Endothelial cell of umbilical vein (primary cell): ENCODE measurements at regions of chrX and their contacts with region 1.

Region 1: GRCh38 chrX:123779908-123780396 is 47.1 kb upstream of the THOC2 start:
- DNase-seq: no peak
- H3K4me3 ChIP-seq: no peak overlapping the region
- H3K27ac ChIP-seq: no peak overlapping the region
- H3K4me1 ChIP-seq: no peaks in the 10 kb centered on the region
- H3K27me3 ChIP-seq: no peaks in the 10 kb centered on the region
- CTCF ChIP-seq: no peak
- POLR2A ChIP-seq: no peak

Region 2: GRCh38 chrX:123740006-123740405 is 39.9 kb before region 1 on chrX:
- CTCF ChIA-PET with region 1: no interaction called
- POLR2A ChIA-PET with region 1: no interaction called
- dilution Hi-C with region 1: no loop called
- intact Hi-C with region 1: no loop called
- DNase-seq: no peak
- H3K4me3 ChIP-seq: no peak overlapping the region
- H3K27ac ChIP-seq: no peak overlapping the region
- H3K4me1 ChIP-seq: no peaks in the 10 kb centered on the region
- H3K27me3 ChIP-seq: peaks cover 4 to 5% of the 10 kb centered on the region in 2 experiments
- CTCF ChIP-seq: no peak
- POLR2A ChIP-seq: no peak

Region 3: GRCh38 chrX:123764967-123765871 is 14.7 kb before region 1 on chrX:
- CTCF ChIA-PET with region 1: interaction called, 11 read pairs
- POLR2A ChIA-PET with region 1: interaction called, 9 read pairs
- dilution Hi-C with region 1: no loop called
- intact Hi-C with region 1: no loop called
- DNase-seq: peak; percentile 39
- H3K4me3 ChIP-seq: peak overlapping the region in 2 of 3 experiments; percentile 32 to 74
- H3K27ac ChIP-seq: no peak overlapping the region
- H3K4me1 ChIP-seq: no peaks in the 10 kb centered on the region
- H3K27me3 ChIP-seq: no peaks in the 10 kb centered on the region
- CTCF ChIP-seq: no peak
- POLR2A ChIP-seq: no peak

Region 4: GRCh38 chrX:123803331-123803983 is 23.5 kb after region 1 on chrX:
- CTCF ChIA-PET with region 1: interaction called, 22 read pairs
- POLR2A ChIA-PET with region 1: no interaction called
- dilution Hi-C with region 1: no loop called
- intact Hi-C with region 1: no loop called
- DNase-seq: peak; percentile 91
- H3K4me3 ChIP-seq: no peak overlapping the region
- H3K27ac ChIP-seq: peak overlapping the region; percentile 69
- H3K4me1 ChIP-seq: peaks cover 6% of the 10 kb centered on the region
- H3K27me3 ChIP-seq: no peaks in the 10 kb centered on the region
- CTCF ChIP-seq: no peak
- POLR2A ChIP-seq: no peak